MCF 10A (cell line): ENCODE measurements at regions of chr11 and their contacts with region 1.

Region 1: GRCh38 chr11:49221112-49221511 is 12.7 kb upstream of the FOLH1 start:
- DNase-seq: no peak
- H3K4me3 Mint-ChIP-seq: no peak overlapping the region
- H3K27ac Mint-ChIP-seq: no peak overlapping the region
- H3K4me1 Mint-ChIP-seq: no peaks in the 10 kb centered on the region
- H3K27me3 Mint-ChIP-seq: peaks cover 3% of the 10 kb centered on the region
- CTCF ChIP-seq: no peak

Region 2: GRCh38 chr11:49377978-49378377 is 156.9 kb after region 1 on chr11:
- CTCF ChIA-PET with region 1: no interaction called
- POLR2A ChIA-PET with region 1: no interaction called
- intact Hi-C with region 1: loop called (anchors 10 kb)
- DNase-seq: no peak
- H3K4me3 Mint-ChIP-seq: no peak overlapping the region
- H3K27ac Mint-ChIP-seq: no peak overlapping the region
- H3K4me1 Mint-ChIP-seq: peaks cover 6% of the 10 kb centered on the region
- H3K27me3 Mint-ChIP-seq: peaks cover 32% of the 10 kb centered on the region
- CTCF ChIP-seq: no peak